ENCODE measurements at regions of chr11 and their contacts with region 1.

Region 1: GRCh38 chr11:34105079-34105956 is at the start of gene NAT10:
- DNase-seq: peak; percentile 98
- ATAC-seq: peak; percentile 88
- H3K4me3 ChIP-seq: peak within 1 kb of the TSS; percentile 89 to 96
- H3K27ac ChIP-seq: peak within 1 kb of the TSS; percentile 73
- H3K4me1 ChIP-seq: peaks cover 4 to 17% of the 10 kb centered on the region in 2 experiments; a peak in 3 of 4 replicates
- H3K27me3 ChIP-seq: no peaks in the 10 kb centered on the region
- CTCF ChIP-seq: no peak
- POLR2A ChIP-seq: peak; percentile 95
- RAD21 ChIP-seq: no peak
- total RNA-seq, gene NAT10: 101 TPM

Region 2: DNA sequence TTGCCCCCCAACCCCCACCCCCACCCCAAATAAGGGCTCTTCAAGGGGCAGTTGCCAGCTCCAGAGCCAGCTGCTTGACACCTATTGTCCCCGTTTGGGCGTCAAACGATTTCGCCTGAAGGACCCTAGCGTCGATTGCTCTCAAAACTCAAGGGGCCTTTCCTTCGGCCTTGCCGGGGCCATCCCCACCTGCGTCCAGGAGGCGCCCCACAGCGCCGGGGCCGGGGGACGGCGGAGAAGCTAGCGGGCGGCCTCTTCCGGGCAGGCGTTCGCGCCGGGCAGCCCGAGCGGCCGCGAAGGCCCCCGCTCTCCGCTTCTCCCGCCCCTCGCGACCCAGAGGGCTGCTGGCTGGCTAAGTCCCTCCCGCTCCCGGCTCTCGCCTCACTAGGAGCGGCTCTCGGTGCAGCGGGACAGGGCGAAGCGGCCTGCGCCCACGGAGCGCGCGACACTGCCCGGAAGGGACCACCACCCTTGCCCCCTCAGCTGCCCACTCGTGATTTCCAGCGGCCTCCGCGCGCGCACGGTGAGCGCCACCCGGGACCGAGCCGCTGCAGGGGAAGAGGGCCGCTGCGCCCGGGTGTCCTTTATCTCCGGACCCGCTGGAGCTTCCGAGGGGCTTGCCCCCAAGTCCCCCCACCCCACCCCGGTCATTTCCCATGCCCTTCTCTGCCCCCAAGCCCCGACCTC is 53.8 kb before region 1 on chr11 and contains the start of gene CAPRIN1:
- CTCF ChIA-PET with region 1: no interaction called
- POLR2A ChIA-PET with region 1: interaction called, 10 read pairs
- RAD21 ChIA-PET with region 1: no interaction called
- intact Hi-C with region 1: loop called (anchors 2 kb)
- DNase-seq: peak; percentile 84
- ATAC-seq: peak; percentile 84
- H3K4me3 ChIP-seq: peak within 1 kb of the TSS; percentile 69 to 71
- H3K27ac ChIP-seq: peak within 1 kb of the TSS; percentile 99
- H3K4me1 ChIP-seq: peaks cover 17 to 37% of the 10 kb centered on the region in 2 experiments; a peak in 3 of 4 replicates
- H3K27me3 ChIP-seq: no peaks in the 10 kb centered on the region
- CTCF ChIP-seq: no peak
- POLR2A ChIP-seq: peak; percentile 71
- RAD21 ChIP-seq: 0 out of 2 replicates have a peak, but pooled peaks have one; percentile 20
- total RNA-seq, gene CAPRIN1: 285 TPM

Measured in HCT116 (cell line).